ENCODE measurements at regions of chr16 and their contacts with region 1.

Region 1: GRCh38 chr16:21300309-21301167 is 22.4 kb upstream of the CRYM start:
- DNase-seq: peak; percentile 100
- H3K4me3 Mint-ChIP-seq: peak overlapping the region; percentile 94
- H3K27ac Mint-ChIP-seq: peak overlapping the region; percentile 98
- H3K4me1 Mint-ChIP-seq: peaks cover 26% of the 10 kb centered on the region
- H3K27me3 Mint-ChIP-seq: no peaks in the 10 kb centered on the region
- CTCF ChIP-seq: peak; percentile 85

Region 2: DNA sequence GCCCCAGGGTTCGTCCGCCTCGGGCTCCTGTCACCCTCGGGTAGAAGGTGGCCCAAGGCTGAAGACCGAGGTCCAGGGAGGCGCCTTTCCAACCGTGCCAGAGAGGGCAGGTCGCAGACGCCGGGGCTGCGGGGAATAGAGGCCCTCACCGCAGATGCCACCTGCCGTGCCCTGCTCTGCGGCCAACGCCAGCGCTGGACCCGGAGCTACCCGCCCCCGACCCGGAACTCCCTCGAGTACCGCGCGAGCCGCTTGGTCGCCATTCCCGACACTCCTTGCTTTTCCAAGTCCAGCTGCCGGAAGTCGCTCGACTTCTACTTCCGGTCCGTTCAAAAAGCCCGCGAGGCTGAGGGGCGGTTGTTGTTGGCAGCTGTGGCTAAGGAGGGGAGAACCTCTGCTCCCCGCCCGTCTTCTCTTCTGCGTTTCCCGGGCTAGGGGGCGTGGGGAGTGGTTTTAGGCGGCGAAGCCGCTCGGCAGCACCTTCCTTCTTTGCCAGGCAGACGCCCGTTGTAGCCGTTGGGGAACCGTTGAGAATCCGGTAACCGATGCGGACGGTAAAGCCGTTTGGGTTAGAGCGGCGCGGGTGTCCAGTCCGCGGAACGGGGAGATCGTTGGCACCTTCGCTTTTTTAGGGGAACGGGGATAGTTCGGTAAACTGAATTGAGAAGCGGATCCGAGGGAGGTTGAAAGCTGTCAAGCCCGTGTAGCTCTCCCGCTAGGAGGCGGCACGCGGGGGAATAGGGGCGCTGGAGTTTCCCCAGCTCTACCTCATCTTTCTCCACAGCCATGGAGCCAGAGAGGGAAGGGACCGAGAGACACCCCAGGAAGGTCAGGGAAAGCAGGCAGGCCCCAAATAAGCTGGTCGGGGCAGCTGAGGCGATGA is 494.1 kb before region 1 on chr16 and contains the starts of genes ERI2 and REXO5:
- CTCF ChIA-PET with region 1: interaction called, 13 read pairs
- POLR2A ChIA-PET with region 1: interaction called, 31 read pairs
- intact Hi-C with region 1: no loop called
- DNase-seq: peak; percentile 95
- H3K4me3 Mint-ChIP-seq: peak within 1 kb of the TSS; percentile 97
- H3K27ac Mint-ChIP-seq: peak within 1 kb of the TSS; percentile 93
- H3K4me1 Mint-ChIP-seq: peaks cover 6% of the 10 kb centered on the region
- H3K27me3 Mint-ChIP-seq: no peaks in the 10 kb centered on the region
- CTCF ChIP-seq: peak; percentile 44
- total RNA-seq, gene ERI2: 26.8 and 28.4 TPM in 2 replicates
- total RNA-seq, gene REXO5: 3.8 and 6.1 TPM in 2 replicates

Region 3: GRCh38 chr16:21158208-21159110 is 142.1 kb before region 1 on chr16 and contains the start of gene LDAF1:
- CTCF ChIA-PET with region 1: interaction called, 96 read pairs
- POLR2A ChIA-PET with region 1: interaction called, 115 read pairs
- intact Hi-C with region 1: loop called (anchors 1 kb)
- DNase-seq: peak; percentile 82
- H3K4me3 Mint-ChIP-seq: peak within 1 kb of the TSS; percentile 97
- H3K27ac Mint-ChIP-seq: peak within 1 kb of the TSS; percentile 95
- H3K4me1 Mint-ChIP-seq: peaks cover 15% of the 10 kb centered on the region
- H3K27me3 Mint-ChIP-seq: no peaks in the 10 kb centered on the region
- CTCF ChIP-seq: no peak
- total RNA-seq, gene LDAF1: 30.1 and 37.8 TPM in 2 replicates

Region 4: DNA sequence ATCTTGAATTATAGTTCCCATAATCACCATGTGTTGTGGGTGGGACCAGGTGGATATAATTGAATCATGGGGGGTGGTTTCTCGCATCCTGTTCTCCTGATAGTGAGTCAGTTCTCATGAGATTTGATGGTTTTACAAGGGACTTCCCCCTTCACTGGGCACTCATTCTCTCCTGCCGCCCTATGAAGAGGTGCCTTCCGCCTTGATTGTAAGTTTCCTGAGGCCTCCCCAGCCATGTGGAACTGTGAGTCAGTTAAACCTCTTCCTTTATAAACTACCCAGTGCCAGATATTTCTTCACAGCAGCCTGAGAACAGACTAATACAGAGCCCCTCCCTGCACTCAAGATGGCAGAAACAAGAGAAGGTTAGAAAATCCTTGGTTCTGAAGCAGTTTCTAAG is 115.7 kb before region 1 on chr16:
- CTCF ChIA-PET with region 1: interaction called, 87 read pairs
- POLR2A ChIA-PET with region 1: interaction called, 89 read pairs
- intact Hi-C with region 1: loop called (anchors 1 kb)
- DNase-seq: no peak
- H3K4me3 Mint-ChIP-seq: no peak overlapping the region
- H3K27ac Mint-ChIP-seq: no peak overlapping the region
- H3K4me1 Mint-ChIP-seq: no peaks in the 10 kb centered on the region
- H3K27me3 Mint-ChIP-seq: no peaks in the 10 kb centered on the region
- CTCF ChIP-seq: no peak

Region 5: DNA sequence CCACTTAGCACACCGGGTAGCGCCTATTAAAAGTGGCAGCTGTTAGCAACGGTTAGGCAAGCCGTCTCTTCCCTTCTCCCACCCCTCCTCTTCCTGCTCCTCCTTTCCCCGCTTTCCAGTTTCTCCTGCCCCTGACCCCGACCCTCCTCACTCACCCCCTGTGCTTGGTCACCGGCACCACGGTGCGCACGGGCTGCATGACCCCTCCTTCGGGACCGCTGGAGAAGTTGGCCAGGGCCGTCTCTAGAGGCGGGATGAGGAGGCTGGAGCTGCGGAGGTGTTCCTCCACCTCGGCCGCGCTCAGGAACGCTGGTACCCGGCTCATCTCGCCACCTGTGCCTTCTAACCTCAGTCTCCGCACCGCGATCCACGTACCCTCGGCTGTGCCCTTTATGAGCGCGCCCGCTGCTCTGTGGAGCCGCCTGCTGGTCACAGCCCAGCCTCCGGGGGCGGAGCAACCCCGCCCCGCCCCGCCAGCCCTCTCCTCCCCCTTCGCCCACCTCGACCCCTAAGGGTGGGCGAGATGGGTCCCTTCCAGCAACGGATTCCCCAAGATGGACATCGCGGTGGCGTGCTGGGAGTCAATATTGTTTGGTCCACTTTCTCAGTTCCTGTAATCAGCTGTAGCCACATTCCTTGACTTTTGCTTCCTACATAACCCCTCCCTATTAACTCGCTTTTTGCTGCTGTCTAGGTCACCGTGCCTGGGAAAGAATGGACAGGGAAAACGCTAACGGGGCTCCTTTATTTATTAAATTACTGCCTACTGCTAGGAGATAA is 22.4 kb before region 1 on chr16 and contains the start of gene CRYM:
- CTCF ChIA-PET with region 1: interaction called, 12 read pairs
- POLR2A ChIA-PET with region 1: interaction called, 10 read pairs
- intact Hi-C with region 1: no loop called
- DNase-seq: no peak
- H3K4me3 Mint-ChIP-seq: peak within 1 kb of the TSS; percentile 67
- H3K27ac Mint-ChIP-seq: no peak within 1 kb of the TSS
- H3K4me1 Mint-ChIP-seq: no peaks in the 10 kb centered on the region
- H3K27me3 Mint-ChIP-seq: peaks cover 63% of the 10 kb centered on the region
- CTCF ChIP-seq: peak; percentile 85
- total RNA-seq, gene CRYM: 1.6 and 4.0 TPM in 2 replicates

Region 6: DNA sequence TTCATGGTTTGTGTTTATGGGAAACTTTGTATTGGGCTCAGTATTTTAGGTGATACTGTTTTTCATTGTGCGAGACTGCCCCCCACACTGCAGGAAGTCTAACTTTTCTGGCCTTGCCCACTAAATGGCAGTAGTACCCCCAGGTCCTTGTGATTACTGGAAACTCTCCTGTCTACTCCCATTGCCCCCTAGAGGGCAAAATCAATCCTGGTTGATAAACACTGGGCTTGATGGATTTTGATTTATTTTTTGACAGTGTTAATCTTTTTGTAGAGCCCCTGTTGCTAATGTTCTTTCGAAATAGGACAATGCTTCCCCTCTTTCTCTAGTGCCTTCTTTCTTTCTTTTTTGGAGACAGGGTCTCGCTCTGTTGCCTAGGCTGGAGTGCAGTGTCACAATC is 314.4 kb after region 1 on chr16:
- CTCF ChIA-PET with region 1: no interaction called
- POLR2A ChIA-PET with region 1: no interaction called
- intact Hi-C with region 1: no loop called
- DNase-seq: no peak
- H3K4me3 Mint-ChIP-seq: no peak overlapping the region
- H3K27ac Mint-ChIP-seq: peak overlapping the region; percentile 75
- H3K4me1 Mint-ChIP-seq: peaks cover 21% of the 10 kb centered on the region
- H3K27me3 Mint-ChIP-seq: no peaks in the 10 kb centered on the region
- CTCF ChIP-seq: no peak